ENCODE measurements at regions of chr1 and their contacts with region 1.

Region 1: DNA sequence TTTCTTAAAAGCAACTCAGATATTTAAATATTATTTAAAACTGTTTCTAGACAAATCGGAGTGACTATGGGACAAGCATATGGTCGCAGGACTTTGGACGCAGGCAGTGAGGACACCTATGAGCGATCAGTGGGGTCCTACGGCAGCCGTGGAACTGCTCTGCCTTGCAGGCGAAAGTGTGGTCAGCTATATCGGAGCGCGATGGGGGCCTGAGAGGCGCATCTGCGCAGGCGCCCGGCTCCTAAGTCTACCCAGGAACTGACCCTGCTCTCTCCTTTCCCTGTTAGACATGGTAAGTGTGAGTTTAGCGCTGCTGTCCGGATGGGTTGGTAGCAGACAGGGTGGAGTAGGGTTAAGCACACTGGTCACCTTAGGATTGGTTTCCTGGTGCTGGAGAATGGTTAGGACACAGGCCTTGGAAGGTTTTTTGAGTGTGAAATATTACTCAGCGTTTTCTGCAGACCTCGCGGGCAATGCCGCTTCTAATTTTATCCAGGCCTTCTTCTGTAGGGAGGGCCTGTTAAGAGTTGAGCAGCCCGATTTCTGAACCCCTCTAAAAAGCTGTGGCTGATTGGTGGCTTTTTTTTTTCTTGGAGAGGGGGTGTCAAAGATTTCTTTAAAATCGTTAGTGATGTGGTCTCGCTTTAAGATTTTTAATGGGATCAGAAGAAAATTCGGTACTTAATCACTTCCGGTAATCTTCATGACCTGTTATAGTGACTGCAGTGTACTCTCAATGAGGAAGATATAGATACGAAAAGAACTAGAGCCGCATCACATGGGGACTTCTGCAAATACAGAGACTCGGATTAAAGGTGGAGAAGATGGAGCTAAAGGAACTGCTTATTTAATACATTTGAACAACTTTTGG is at the start of gene RABGGTB:
- DNase-seq: peak; percentile 97
- ATAC-seq: peak; percentile 91
- H3K4me3 ChIP-seq: peak within 1 kb of the TSS; percentile 76 to 99 (median 95)
- H3K4me3 Mint-ChIP-seq: peak within 1 kb of the TSS; percentile 97
- H3K27ac ChIP-seq: peak within 1 kb of the TSS; percentile 77 to 90
- H3K27ac Mint-ChIP-seq: peak within 1 kb of the TSS; percentile 97
- H3K4me1 ChIP-seq: peaks cover 42 to 46% of the 10 kb centered on the region in 2 donors
- H3K4me1 Mint-ChIP-seq: peaks cover 57% of the 10 kb centered on the region
- H3K27me3 ChIP-seq: no peaks in the 10 kb centered on the region
- H3K27me3 Mint-ChIP-seq: no peaks in the 10 kb centered on the region
- CTCF ChIP-seq: no peak
- total RNA-seq, gene RABGGTB: 132 and 134 TPM in 2 replicates

Region 2: GRCh38 chr1:75615613-75616435 is 170.4 kb before region 1 on chr1:
- CTCF ChIA-PET with region 1: no interaction called
- POLR2A ChIA-PET with region 1: no interaction called
- intact Hi-C with region 1: loop called (anchors 5 kb)
- DNase-seq: peak; percentile 36
- ATAC-seq: peak; percentile 62
- H3K4me3 ChIP-seq: peak overlapping the region in 4 of 5 experiments; percentile 7 to 63 (median 43)
- H3K4me3 Mint-ChIP-seq: peak overlapping the region; percentile 79
- H3K27ac ChIP-seq: no peak overlapping the region
- H3K27ac Mint-ChIP-seq: no peak overlapping the region
- H3K4me1 ChIP-seq: peaks cover 23 to 27% of the 10 kb centered on the region in 2 donors
- H3K4me1 Mint-ChIP-seq: peaks cover 24% of the 10 kb centered on the region
- H3K27me3 ChIP-seq: peaks cover 0 to 44% (median 41%) of the 10 kb centered on the region in 4 experiments
- H3K27me3 Mint-ChIP-seq: peaks cover 74% of the 10 kb centered on the region
- CTCF ChIP-seq: no peak

Region 3: DNA sequence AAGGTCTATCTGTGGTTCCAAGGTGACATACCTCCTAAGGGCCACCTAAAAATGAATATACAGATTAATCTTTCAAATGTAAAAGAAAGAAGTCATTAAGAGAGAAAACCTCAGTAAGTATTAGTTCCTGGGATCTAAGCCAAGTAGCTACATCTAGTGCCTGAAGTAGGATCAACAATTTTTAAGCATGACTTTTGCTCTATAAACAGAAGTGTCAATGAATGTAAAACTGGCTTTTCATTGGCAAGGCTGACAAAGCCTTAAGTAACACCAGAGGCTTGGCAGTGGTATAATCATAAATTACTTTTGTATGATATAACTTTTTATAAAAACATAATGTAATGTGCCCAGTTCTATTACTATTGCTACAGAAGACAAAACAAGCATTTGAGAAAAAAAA is 73.9 kb before region 1 on chr1:
- CTCF ChIA-PET with region 1: no interaction called
- POLR2A ChIA-PET with region 1: no interaction called
- intact Hi-C with region 1: no loop called
- DNase-seq: no peak
- ATAC-seq: no peak
- H3K4me3 ChIP-seq: no peak overlapping the region
- H3K4me3 Mint-ChIP-seq: no peak overlapping the region
- H3K27ac ChIP-seq: no peak overlapping the region
- H3K27ac Mint-ChIP-seq: no peak overlapping the region
- H3K4me1 ChIP-seq: no peaks in the 10 kb centered on the region
- H3K4me1 Mint-ChIP-seq: no peaks in the 10 kb centered on the region
- H3K27me3 ChIP-seq: peaks cover 0 to 4% (median 2%) of the 10 kb centered on the region in 4 experiments
- H3K27me3 Mint-ChIP-seq: peaks cover 44% of the 10 kb centered on the region
- CTCF ChIP-seq: no peak

Region 4: GRCh38 chr1:75745276-75745675 is 40.9 kb before region 1 on chr1:
- CTCF ChIA-PET with region 1: no interaction called
- POLR2A ChIA-PET with region 1: no interaction called
- intact Hi-C with region 1: loop called (anchors 5 kb)
- DNase-seq: no peak
- ATAC-seq: peak; percentile 28
- H3K4me3 ChIP-seq: no peak overlapping the region
- H3K4me3 Mint-ChIP-seq: no peak overlapping the region
- H3K27ac ChIP-seq: no peak overlapping the region
- H3K27ac Mint-ChIP-seq: peak overlapping the region; percentile 74
- H3K4me1 ChIP-seq: no peaks in the 10 kb centered on the region
- H3K4me1 Mint-ChIP-seq: peaks cover 5% of the 10 kb centered on the region
- H3K27me3 ChIP-seq: no peaks in the 10 kb centered on the region
- H3K27me3 Mint-ChIP-seq: no peaks in the 10 kb centered on the region
- CTCF ChIP-seq: no peak

Region 5: GRCh38 chr1:77683160-77684148 is 1897.2 kb after region 1 on chr1:
- CTCF ChIA-PET with region 1: no interaction called
- POLR2A ChIA-PET with region 1: no interaction called
- intact Hi-C with region 1: loop called (anchors 1 kb)
- DNase-seq: peak; percentile 95
- ATAC-seq: peak; percentile 76
- H3K4me3 ChIP-seq: peak overlapping the region; percentile 13 to 89 (median 67)
- H3K4me3 Mint-ChIP-seq: peak overlapping the region; percentile 90
- H3K27ac ChIP-seq: peak overlapping the region; percentile 89 to 98
- H3K27ac Mint-ChIP-seq: peak overlapping the region; percentile 95
- H3K4me1 ChIP-seq: peaks cover 16 to 27% of the 10 kb centered on the region in 2 donors
- H3K4me1 Mint-ChIP-seq: peaks cover 37% of the 10 kb centered on the region
- H3K27me3 ChIP-seq: no peaks in the 10 kb centered on the region
- H3K27me3 Mint-ChIP-seq: no peaks in the 10 kb centered on the region
- CTCF ChIP-seq: peak; percentile 95

Measured in B cell (primary cell).